Activated CD8-positive, alpha-beta T cell treated with anti-CD3 and anti-CD28 coated beads for 36 hours (primary cell): ENCODE measurements at regions of chr5 and their contacts with region 1.

Region 1: GRCh38 chr5:139273572-139274289 is 19.8 kb upstream of the MATR3 start:
- DNase-seq: peak; percentile 90
- ATAC-seq: peak; percentile 93
- H3K4me3 Mint-ChIP-seq: peak overlapping the region; percentile 97
- H3K27ac Mint-ChIP-seq: peak overlapping the region; percentile 92
- H3K4me1 Mint-ChIP-seq: peaks cover 58% of the 10 kb centered on the region
- H3K27me3 Mint-ChIP-seq: peaks cover 2% of the 10 kb centered on the region
- CTCF ChIP-seq: no peak

Region 2: DNA sequence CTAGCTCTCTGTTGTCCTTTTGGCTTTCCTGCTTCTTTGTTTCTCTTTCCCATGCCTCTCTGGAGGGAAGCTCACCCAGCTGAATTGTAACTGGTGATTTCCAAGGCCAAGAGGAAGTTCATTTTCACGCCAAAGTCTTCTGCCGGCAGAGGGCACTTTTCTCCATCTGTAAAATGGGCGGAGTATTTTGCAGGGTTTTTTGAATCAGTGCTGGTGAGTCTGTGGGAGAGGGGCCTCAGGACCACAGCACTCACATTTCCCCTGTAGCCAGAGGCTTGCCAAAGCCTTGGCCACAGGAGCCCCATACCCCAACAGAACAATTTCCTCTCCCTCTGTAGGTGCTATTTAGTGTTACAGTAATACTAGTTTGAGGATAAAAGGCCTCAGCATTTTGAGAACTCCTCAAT is 22.4 kb before region 1 on chr5:
- CTCF ChIA-PET with region 1: interaction called, 11 read pairs
- POLR2A ChIA-PET with region 1: interaction called, 3 read pairs
- intact Hi-C with region 1: no loop called
- DNase-seq: peak; percentile 68
- ATAC-seq: no peak
- H3K4me3 Mint-ChIP-seq: no peak overlapping the region
- H3K27ac Mint-ChIP-seq: no peak overlapping the region
- H3K4me1 Mint-ChIP-seq: peaks cover 15% of the 10 kb centered on the region
- H3K27me3 Mint-ChIP-seq: no peaks in the 10 kb centered on the region
- CTCF ChIP-seq: peak; percentile 53

Region 3: GRCh38 chr5:139341650-139342422 is 68.1 kb after region 1 on chr5 and contains the start of gene PAIP2:
- CTCF ChIA-PET with region 1: interaction called, 4 read pairs
- POLR2A ChIA-PET with region 1: interaction called, 11 read pairs
- intact Hi-C with region 1: no loop called
- DNase-seq: peak; percentile 99
- ATAC-seq: peak; percentile 90
- H3K4me3 Mint-ChIP-seq: peak within 1 kb of the TSS; percentile 89
- H3K27ac Mint-ChIP-seq: peak within 1 kb of the TSS; percentile 95
- H3K4me1 Mint-ChIP-seq: peaks cover 39% of the 10 kb centered on the region
- H3K27me3 Mint-ChIP-seq: no peaks in the 10 kb centered on the region
- CTCF ChIP-seq: peak; percentile 70
- total RNA-seq, gene PAIP2: 110 to 113 TPM